ENCODE measurements at regions of chr6 and their contacts with region 1.

Region 1: DNA sequence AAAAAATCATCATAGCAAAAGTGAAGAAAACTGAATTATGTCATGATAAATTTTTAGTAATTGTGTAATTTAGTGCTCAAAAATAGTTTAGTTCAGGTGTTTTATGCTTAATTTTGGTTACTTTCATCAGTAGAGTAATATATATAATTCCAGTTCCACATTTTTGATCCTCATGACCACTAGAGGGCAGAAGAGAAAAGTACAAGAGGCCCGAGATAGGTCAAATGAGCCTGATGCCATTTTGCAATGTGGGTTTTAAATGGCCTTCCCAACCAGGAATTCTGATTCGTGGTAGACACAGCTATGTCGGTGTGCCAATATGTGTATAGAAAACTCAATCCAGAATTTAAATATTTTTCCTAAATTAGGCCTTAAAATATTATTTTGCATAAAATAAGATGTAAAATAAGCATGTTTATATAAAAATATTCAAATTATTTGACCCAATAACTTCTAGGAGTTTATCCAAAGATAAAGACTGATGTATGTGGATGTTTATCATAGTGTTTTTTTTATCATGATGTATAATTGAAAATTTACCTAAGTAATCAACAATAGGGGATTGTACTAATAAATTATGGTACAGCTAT is 159.7 kb upstream of the RPS6KA2 start:
- DNase-seq: peak; percentile 74
- H3K4me3 Mint-ChIP-seq: no peak overlapping the region
- H3K27ac Mint-ChIP-seq: no peak overlapping the region
- H3K4me1 Mint-ChIP-seq: no peaks in the 10 kb centered on the region
- H3K27me3 Mint-ChIP-seq: peaks cover 24% of the 10 kb centered on the region
- CTCF ChIP-seq: peak; percentile 60

Region 2: DNA sequence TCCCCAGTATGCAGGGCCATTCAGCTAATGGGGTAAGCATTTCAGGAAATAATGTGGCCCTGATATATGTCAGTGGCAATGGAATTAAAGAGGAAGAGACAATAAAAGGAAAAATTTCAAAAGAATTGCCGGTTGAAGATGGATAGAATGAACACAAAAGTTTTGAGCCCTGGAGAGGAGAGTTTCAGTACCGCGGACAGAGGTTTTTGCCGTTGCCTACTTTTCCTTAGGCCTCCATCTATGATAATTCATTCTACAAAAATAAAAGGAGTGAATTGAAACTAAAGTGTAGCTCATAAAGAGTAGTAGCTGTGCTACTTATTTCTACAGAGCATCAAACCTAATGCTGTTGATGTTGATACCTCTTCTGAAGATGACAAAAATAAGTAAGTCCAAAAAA is 28.8 kb after region 1 on chr6:
- CTCF ChIA-PET with region 1: no interaction called
- POLR2A ChIA-PET with region 1: no interaction called
- intact Hi-C with region 1: no loop called
- DNase-seq: peak; percentile 36
- H3K4me3 Mint-ChIP-seq: no peak overlapping the region
- H3K27ac Mint-ChIP-seq: no peak overlapping the region
- H3K4me1 Mint-ChIP-seq: no peaks in the 10 kb centered on the region
- H3K27me3 Mint-ChIP-seq: peaks cover 14% of the 10 kb centered on the region
- CTCF ChIP-seq: no peak

Region 3: GRCh38 chr6:166950443-166950821 is 163.6 kb after region 1 on chr6:
- CTCF ChIA-PET with region 1: interaction called, 14 read pairs
- POLR2A ChIA-PET with region 1: interaction called, 9 read pairs
- intact Hi-C with region 1: loop called (anchors 1 kb)
- DNase-seq: no peak
- H3K4me3 Mint-ChIP-seq: no peak overlapping the region
- H3K27ac Mint-ChIP-seq: no peak overlapping the region
- H3K4me1 Mint-ChIP-seq: peaks cover 16% of the 10 kb centered on the region
- H3K27me3 Mint-ChIP-seq: no peaks in the 10 kb centered on the region
- CTCF ChIP-seq: no peak

Region 4: DNA sequence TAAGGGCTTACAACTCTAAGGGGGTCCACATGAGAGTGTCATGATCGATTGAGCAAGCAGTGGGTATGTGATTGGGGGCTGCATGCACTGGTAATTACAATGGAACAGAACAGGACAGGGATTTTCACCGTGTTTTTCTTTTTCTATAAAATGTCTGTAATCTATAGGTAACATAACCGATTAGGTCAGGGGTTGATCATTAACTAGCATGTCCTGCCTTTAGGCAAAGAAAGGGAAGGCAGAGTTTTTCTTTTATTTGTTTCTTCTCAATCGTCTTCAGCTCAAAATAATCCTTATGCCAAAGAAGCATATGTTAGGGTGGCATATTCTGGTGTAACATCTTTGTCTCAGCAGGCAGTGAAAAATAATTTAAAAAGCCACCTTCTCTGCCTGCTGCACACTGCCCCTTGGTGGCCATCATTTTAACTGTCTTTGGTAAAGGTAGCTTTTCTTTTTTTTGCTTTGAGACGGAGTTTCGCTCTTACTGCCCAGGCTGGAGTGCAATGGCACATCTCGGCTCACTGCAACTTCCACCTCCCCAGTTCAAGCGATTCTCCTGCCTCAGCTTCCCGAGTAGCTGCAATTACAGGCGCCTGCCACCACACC is 202.7 kb after region 1 on chr6:
- CTCF ChIA-PET with region 1: interaction called, 24 read pairs
- POLR2A ChIA-PET with region 1: no interaction called
- intact Hi-C with region 1: loop called (anchors 1 kb)
- DNase-seq: peak; percentile 39
- H3K4me3 Mint-ChIP-seq: no peak overlapping the region
- H3K27ac Mint-ChIP-seq: no peak overlapping the region
- H3K4me1 Mint-ChIP-seq: no peaks in the 10 kb centered on the region
- H3K27me3 Mint-ChIP-seq: no peaks in the 10 kb centered on the region
- CTCF ChIP-seq: peak; percentile 43

Region 5: DNA sequence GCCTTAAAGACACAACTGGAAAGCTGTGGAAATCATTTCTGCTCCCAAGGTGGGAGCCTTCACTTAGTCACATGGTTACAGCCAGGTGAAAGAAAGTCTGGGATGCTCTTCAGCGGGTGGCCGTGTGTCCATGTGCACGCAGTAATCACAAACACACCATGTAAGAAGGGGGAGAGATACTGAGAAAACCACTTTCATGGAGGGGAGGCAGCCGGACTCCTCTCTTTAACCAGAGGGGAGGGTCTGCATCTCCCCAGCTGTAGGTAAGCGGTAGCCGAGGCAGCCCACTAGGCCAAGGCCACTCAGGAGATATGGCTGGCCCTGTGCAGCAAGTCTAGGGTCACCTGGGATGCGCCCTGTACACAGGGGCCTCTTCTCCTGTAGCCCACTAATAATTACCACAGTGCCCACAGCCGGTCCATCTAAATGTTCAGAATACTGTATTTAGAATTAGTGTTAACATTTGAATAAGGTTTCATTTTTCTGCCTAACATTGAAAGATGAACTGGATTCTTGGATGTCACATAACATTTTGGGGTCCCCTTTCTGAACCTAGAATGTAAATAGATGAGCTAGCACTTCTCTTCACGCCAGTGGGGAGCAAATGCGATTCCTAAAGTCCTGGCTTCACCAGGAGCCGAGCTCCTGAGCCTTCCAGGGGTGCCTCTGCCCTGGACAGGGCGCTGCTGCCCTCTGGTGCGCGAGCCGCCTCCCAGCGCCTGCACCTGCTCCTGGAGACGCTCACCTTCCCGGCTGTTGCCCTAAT is 355.1 kb after region 1 on chr6:
- CTCF ChIA-PET with region 1: interaction called, 4 read pairs
- POLR2A ChIA-PET with region 1: no interaction called
- intact Hi-C with region 1: loop called (anchors 1 kb)
- DNase-seq: peak; percentile 49
- H3K4me3 Mint-ChIP-seq: no peak overlapping the region
- H3K27ac Mint-ChIP-seq: no peak overlapping the region
- H3K4me1 Mint-ChIP-seq: no peaks in the 10 kb centered on the region
- H3K27me3 Mint-ChIP-seq: peaks cover 66% of the 10 kb centered on the region
- CTCF ChIP-seq: peak; percentile 67

Measured in MCF 10A (cell line).